Ascending aorta (tissue), 2 donors: ENCODE measurements at regions of chr10 and their contacts with region 1.

Region 1: DNA sequence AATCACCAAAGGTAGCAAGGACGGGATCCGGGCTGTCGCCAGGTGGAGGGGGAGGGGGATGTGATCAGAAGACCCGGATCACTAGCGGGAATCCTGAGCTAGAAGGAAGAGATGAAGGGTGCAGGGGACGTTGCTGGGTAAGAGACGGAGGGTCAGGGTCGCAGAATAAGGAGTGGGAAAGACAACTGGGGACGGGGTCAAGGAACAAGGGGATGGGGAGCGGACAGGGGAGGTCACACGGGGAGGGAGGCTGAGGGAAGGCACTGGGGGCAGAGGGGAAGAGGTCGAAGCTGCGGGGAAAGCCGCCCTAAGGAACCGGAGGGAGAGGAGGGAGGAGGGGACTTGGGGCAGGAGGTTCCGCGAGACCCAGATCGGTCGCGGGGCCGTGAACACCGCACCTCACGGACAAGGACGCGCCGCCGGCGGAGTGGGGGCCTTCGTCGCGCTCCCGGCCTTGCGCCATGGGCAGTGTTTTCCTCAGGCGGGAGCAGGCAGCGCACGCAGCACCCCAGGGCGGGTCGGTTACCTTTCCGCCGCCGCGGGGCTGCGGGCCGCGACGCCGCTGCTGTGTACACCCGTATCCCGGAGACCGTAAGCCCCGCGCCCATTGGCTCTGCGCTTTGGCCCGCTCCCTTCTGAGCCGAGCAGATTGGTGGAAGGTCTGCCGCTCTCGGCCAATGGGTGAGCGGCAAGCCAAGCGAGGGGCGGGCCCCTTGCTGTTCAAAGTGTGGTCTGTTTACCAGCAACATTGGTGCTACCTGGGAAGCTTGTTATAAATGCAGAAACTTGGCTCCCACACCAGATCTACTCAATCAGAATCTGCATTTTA is at the start of gene CFAP43:
- DNase-seq: peak; percentile 92 to 99
- H3K4me3 ChIP-seq: peak within 1 kb of the TSS; percentile 71 to 88
- H3K27ac ChIP-seq: no peak within 1 kb of the TSS
- H3K4me1 ChIP-seq: peaks cover 0 to 7% of the 10 kb centered on the region in 2 donors
- H3K27me3 ChIP-seq: no peaks in the 10 kb centered on the region
- CTCF ChIP-seq: no peak
- total RNA-seq, gene CFAP43: 0.96 TPM

Region 2: GRCh38 chr10:104002911-104003310 is 229.1 kb before region 1 on chr10:
- intact Hi-C with region 1: no loop called
- DNase-seq: no peak
- H3K4me3 ChIP-seq: no peak overlapping the region
- H3K27ac ChIP-seq: no peak overlapping the region
- H3K4me1 ChIP-seq: no peaks in the 10 kb centered on the region
- H3K27me3 ChIP-seq: no peaks in the 10 kb centered on the region
- CTCF ChIP-seq: no peak

Region 3: DNA sequence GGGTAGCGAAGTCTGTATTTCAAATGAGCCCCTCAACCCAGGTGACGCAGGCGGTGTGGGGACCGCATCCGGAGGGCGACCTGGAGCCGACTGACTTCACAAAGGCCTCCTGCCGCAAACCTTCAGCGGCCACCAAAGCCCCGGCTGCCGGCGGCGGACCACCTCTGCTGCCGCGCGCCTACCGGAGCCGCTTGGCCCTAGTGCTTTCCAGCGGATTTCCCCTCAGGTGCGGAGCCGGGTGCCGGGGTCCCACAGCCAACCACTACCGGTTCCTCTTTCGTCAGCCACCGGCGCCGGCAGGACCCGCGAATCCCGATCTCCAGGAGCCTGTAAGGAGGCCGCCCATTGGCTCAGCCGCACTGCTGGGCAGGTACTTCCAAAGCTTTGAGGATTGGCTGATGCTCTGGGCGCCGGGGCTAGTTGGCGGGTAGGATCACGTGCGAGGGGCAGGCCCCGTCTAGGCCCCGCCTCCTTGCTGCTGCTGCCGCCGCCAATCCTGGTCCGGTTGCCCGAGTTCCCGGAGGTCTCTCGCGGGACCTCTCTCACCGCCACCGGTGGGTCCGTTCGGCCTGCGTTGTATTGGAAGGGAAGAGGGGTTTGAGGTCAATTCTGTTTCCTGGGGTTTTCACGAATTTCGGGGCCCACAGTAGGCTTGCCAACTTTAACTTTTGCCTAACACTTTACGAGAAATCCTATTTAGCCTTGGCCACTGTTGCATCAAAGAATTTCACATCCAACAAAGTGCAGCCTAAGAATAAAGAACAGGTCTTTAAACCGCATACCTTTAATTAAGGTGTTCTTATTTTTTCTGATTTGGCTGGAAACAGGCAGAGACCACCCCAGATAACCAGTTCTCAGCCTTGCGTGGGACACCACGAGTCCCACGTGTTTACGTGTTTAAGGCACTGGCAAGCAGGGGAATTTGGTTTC is 37.0 kb after region 1 on chr10 and contains the start of gene GSTO2:
- intact Hi-C with region 1: loop called (anchors 2 kb)
- DNase-seq: peak; percentile 99 to 100
- H3K4me3 ChIP-seq: peak within 1 kb of the TSS; percentile 97 to 98
- H3K27ac ChIP-seq: peak within 1 kb of the TSS; percentile 91 to 97
- H3K4me1 ChIP-seq: peaks cover 0 to 11% of the 10 kb centered on the region in 2 donors
- H3K27me3 ChIP-seq: no peaks in the 10 kb centered on the region
- CTCF ChIP-seq: no peak
- total RNA-seq, gene GSTO2: not detected

Region 4: DNA sequence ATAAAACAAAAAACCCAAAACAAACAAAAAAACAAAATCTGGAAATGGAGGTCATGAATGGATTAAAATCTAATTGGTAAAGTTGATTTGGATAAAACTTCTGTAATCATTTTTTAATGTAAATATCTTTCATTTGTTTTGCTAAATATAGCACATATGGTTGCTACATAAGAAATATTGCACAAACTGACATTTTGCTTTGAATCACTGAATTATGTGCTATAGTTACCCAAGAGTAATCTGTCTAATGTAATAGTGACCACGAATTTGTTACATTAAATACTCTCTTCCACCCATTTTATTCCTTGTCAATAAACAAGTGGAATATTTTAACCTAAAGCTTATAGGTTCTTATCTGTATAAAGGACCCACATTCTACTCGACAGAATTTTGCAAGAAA is 127.8 kb after region 1 on chr10:
- intact Hi-C with region 1: no loop called
- DNase-seq: no peak
- H3K4me3 ChIP-seq: no peak overlapping the region
- H3K27ac ChIP-seq: no peak overlapping the region
- H3K4me1 ChIP-seq: no peaks in the 10 kb centered on the region
- H3K27me3 ChIP-seq: no peaks in the 10 kb centered on the region
- CTCF ChIP-seq: no peak